Gastrocnemius medialis (tissue), 4 donors: ENCODE measurements at regions of chr15 and their contacts with region 1.

Region 1: DNA sequence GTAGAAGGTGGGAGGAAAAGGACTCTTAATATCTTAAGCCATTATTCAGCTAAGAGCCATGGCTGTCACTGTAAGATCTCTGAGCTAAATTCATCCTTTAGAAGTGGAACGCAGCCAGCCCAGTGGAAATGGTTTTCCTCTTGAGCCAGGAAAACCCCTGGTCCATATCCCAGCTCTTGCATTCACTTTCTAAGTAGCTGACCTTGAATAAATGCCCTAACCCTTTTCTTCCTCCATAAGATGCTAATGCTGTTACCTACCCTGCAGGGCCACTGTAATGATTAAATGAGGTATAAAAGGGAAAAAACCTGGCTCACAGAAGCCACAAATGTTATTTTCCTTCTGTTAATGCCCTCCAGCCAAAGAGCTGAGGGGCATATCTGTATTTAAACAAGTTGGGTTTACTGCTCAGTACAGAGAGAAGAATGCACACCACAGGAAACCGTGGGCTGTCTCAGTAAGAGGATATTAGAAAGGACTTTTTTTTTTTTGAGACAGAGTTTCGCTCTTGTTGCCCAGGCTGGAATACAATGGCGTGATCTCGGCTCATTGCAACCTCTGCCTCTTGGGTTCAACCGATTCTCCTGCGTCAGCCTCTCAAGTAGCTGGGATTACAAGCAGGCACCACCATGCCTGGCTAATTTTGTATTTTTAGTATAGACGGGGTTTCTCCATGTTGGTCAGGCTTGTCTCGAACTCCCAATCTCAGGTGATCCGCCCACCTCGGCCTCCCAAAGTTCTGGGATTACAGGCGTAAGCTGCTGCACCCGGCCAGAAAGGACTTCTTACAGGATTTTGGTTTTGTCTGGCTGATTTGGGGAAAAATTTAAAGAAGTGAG is 6.8 kb downstream of the UBL7 start:
- DNase-seq: no peak
- ATAC-seq: no peak
- H3K4me3 ChIP-seq: no peak overlapping the region
- H3K27ac ChIP-seq: peak overlapping the region in 3 of 4 donors; percentile 13 to 23 (median 13)
- H3K4me1 ChIP-seq: no peaks in the 10 kb centered on the region
- H3K27me3 ChIP-seq: no peaks in the 10 kb centered on the region
- CTCF ChIP-seq: no peak
- POLR2A ChIP-seq: no peak

Region 2: DNA sequence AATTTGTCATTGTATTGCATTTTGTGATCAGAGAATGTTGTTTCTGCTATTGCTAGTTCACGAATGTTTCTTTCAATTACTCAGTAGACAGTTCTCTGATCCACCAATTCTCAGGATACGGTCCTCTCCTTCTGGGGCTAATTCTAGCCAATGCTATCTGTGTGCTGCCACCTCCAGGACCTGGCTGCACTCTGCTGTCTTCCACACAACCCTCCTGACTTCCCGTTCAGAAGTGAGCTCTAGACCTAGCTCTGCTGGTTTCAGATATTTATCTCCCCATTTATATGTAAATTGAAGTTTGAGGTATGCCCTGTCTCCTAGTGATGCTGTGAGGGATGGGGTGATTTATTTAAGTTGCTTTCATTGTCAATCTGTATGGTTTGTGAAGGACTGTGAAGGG is 28.5 kb after region 1 on chr15:
- in situ Hi-C with region 1: no loop called
- intact Hi-C with region 1: no loop called
- DNase-seq: no peak
- ATAC-seq: peak; percentile 36 to 81
- H3K4me3 ChIP-seq: no peak overlapping the region
- H3K27ac ChIP-seq: no peak overlapping the region
- H3K4me1 ChIP-seq: no peaks in the 10 kb centered on the region
- H3K27me3 ChIP-seq: no peaks in the 10 kb centered on the region
- CTCF ChIP-seq: peak in 2 of 5 experiments; percentile 39 to 40
- POLR2A ChIP-seq: no peak

Region 3: DNA sequence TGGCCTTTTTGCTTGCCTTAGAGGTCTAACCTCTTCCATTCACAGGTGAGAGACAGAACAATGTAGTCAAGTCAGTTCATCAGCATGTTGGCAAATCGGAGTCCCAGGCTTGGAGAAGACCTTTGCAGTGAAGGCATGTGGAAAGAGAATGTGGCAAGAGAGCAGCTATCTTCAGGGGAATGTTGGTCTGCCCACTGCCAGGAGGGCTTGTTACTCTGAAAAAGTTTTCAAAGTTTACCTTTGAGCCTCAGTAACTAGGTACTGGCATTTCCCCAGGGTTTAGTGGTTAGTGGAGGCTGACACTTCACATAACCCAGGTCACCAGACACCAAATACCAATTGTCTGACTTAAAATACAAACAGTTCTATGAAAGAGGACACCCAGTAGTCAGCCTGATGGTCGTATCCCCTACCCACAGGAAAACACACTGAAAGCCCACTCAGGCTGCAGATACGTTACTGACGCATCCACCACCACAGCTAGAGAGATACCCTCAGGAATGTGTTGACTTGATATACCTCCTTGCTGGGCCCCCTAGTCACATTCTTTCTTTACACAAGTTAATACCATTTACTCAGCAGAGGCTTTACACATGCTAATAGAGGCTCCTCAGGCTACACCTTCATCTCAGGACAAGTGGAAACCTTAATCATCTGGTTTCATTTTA is 77.1 kb after region 1 on chr15:
- in situ Hi-C with region 1: loop called in 1 of 4 experiments (anchors 10 kb)
- intact Hi-C with region 1: no loop called
- DNase-seq: no peak
- ATAC-seq: no peak
- H3K4me3 ChIP-seq: no peak overlapping the region
- H3K27ac ChIP-seq: no peak overlapping the region
- H3K4me1 ChIP-seq: no peaks in the 10 kb centered on the region
- H3K27me3 ChIP-seq: no peaks in the 10 kb centered on the region
- CTCF ChIP-seq: no peak
- POLR2A ChIP-seq: no peak

Region 4: GRCh38 chr15:74573987-74574386 is 119.8 kb after region 1 on chr15:
- in situ Hi-C with region 1: no loop called
- intact Hi-C with region 1: no loop called
- DNase-seq: no peak
- ATAC-seq: no peak
- H3K4me3 ChIP-seq: no peak overlapping the region
- H3K27ac ChIP-seq: no peak overlapping the region
- H3K4me1 ChIP-seq: peaks cover 15% of the 10 kb centered on the region in 2 donors
- H3K27me3 ChIP-seq: no peaks in the 10 kb centered on the region
- CTCF ChIP-seq: no peak
- POLR2A ChIP-seq: no peak